Naive thymus-derived CD4-positive, alpha-beta T cell (primary cell): ENCODE measurements at regions of chr4 and their contacts with region 1.

Region 1: DNA sequence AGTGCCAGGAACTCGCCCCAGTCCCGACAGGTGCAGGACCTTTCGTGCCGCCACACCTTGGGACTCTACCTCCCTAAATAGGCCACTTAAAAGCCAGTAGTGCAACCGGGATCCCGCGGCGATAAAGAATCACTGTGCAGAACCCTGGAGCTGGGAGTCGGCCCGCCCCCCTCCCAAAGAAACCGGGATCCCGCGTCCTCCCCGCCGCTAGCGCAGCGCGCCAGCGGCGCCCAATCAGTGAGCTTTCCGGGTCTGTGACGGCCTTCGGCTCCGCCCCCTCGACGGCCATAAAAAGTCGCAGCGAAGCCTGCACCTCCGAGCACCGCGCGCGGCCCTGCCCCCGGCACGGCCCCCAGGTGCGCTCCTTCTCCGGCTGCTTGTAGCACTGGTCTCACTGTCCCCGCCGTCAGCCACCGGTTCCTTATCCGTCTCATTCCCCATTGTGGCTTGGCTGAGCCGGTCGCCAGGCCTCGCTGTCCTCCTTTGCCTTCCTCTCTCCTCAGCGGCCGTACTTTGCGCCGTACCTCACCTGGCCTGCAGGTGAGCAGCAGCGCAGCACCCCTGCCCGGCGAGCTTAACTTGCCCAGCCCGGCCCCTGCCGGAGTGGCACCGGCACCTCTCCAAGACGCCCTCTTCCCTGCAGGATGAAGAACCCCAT is at the start of gene LRAT:
- DNase-seq: peak in 7 of 9 donors; percentile 0 to 45 (median 10)
- ATAC-seq: peak; percentile 78
- H3K4me3 ChIP-seq: peak within 1 kb of the TSS; percentile 30
- H3K4me3 Mint-ChIP-seq: peak within 1 kb of the TSS; percentile 82 to 92 (median 88)
- H3K27ac ChIP-seq: no peak within 1 kb of the TSS
- H3K27ac Mint-ChIP-seq: peak within 1 kb of the TSS in 1 of 9 donors; percentile 29
- H3K4me1 ChIP-seq: no peaks in the 10 kb centered on the region
- H3K4me1 Mint-ChIP-seq: peaks cover 11 to 38% (median 21%) of the 10 kb centered on the region in 7 donors
- H3K27me3 ChIP-seq: peaks cover 0 to 9% of the 10 kb centered on the region in 2 donors
- H3K27me3 Mint-ChIP-seq: peaks cover 78 to 90% (median 81%) of the 10 kb centered on the region in 5 donors
- total RNA-seq, gene LRAT: not detected

Region 2: DNA sequence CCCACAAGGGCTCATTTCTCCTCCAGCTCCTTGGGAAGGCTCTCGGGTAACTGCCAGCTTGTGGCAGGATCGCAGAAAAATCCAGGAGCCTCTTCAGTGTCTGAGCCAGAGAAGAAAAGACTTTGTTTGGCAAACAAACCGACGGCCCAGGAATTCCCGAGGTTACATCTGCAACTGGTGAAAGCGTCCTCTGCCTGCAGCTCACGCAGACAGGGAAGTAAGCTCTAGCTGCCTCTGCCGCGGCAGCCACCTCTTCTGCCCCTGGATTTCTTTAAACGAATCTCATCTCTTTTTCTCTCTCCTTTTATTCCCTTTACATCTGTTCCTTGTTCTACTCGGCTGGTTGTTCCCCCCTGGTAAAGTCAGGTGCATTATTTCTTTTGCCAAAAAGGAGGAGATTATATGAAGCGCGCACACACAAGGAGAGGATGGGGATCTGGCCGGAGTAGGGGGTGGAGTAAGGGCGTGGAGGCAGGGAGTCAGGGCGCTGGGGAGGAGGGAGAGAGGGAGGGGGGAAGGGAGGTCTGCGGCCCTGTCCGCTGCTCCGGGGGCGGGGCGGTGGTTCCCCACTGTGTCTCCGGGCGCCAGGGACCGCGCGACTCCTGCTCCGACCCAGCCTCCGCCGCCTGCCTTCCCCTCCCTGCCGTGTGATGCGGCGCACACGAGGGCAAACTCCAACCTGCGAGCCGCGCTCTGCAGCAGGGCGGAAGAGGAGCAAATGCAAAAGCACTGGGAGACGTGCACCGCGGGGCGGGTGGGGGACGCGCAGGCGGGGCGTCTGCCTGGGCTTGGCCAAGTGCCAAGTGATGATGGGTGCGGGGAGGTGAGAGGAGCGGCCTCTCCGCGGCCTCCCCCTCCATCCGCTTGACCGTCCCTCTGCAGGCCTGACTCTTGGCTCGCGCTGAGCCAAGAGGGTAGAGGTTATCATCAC is 252.2 kb before region 1 on chr4 and contains the start of gene DCHS2:
- CTCF ChIA-PET with region 1: no interaction called
- POLR2A ChIA-PET with region 1: no interaction called
- intact Hi-C with region 1: loop called in 1 of 2 experiments (anchors 5 kb)
- DNase-seq: peak in 1 of 9 donors; percentile 1
- ATAC-seq: peak; percentile 39
- H3K4me3 ChIP-seq: peak within 1 kb of the TSS; percentile 24
- H3K4me3 Mint-ChIP-seq: peak within 1 kb of the TSS; percentile 59 to 87 (median 76)
- H3K27ac ChIP-seq: no peak within 1 kb of the TSS
- H3K27ac Mint-ChIP-seq: peak within 1 kb of the TSS in 1 of 9 donors; percentile 17
- H3K4me1 ChIP-seq: no peaks in the 10 kb centered on the region
- H3K4me1 Mint-ChIP-seq: peaks cover 11 to 32% (median 20%) of the 10 kb centered on the region in 7 donors
- H3K27me3 ChIP-seq: no peaks in the 10 kb centered on the region
- H3K27me3 Mint-ChIP-seq: peaks cover 37 to 82% (median 65%) of the 10 kb centered on the region in 5 donors
- total RNA-seq, gene DCHS2: 0.05 to 0.08 TPM in 2 of 5 experiments, not detected in the others